Sigmoid colon (tissue), 7 donors: ENCODE measurements at regions of chr15 and their contacts with region 1.

Region 1: GRCh38 chr15:25830844-25831451 is 32.2 kb downstream of the ATP10A start:
- DNase-seq: peak; percentile 89
- H3K4me3 ChIP-seq: peak overlapping the region in 3 of 4 donors; percentile 25 to 39 (median 26)
- H3K27ac ChIP-seq: peak overlapping the region; percentile 80 to 93 (median 84)
- H3K4me1 ChIP-seq: peaks cover 0 to 30% (median 28%) of the 10 kb centered on the region in 4 donors
- H3K27me3 ChIP-seq: no peaks in the 10 kb centered on the region
- CTCF ChIP-seq: no peak
- EP300 ChIP-seq: peak in 2 of 4 donors; percentile 44 to 77
- POLR2A ChIP-seq: no peak

Region 2: GRCh38 chr15:25739687-25740121 is 91.2 kb before region 1 on chr15:
- intact Hi-C with region 1: loop called (anchors 5 kb)
- DNase-seq: no peak
- H3K4me3 ChIP-seq: no peak overlapping the region
- H3K27ac ChIP-seq: peak overlapping the region in 2 of 4 donors; percentile 23 to 88
- H3K4me1 ChIP-seq: peaks cover 0 to 35% (median 30%) of the 10 kb centered on the region in 4 donors
- H3K27me3 ChIP-seq: no peaks in the 10 kb centered on the region
- CTCF ChIP-seq: peak in 2 of 4 experiments; percentile 31 to 33
- EP300 ChIP-seq: no peak
- POLR2A ChIP-seq: no peak

Region 3: DNA sequence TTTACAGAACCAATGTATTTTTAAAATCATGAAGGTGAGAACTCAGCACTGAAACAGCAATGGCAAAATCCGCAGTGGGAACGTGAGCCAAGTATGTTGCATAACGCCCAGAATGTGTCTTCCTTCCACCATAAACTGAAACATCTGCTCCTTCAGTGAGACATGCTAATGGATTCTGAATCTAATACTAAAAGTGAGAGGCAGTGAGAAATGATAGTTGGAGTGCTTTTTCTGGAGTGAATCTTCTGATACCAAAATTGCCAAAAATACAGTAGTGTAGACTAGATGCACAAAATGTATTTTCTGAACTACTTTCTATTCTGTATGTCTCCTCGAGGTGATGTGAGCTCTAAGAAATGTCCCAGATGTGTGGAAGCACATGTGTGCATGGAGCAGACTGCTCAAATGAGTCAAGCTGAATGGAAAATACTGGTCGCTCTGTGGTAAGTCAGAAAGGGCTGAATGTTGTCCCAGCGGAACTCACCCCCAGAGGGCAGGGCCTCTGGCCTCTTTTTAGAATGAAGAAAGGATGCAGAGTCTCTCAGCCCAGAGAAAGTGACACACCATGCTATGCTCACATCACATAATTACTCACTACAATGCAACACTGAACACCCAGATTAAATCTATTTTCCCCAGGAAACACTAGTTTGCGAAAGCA is 40.8 kb before region 1 on chr15:
- intact Hi-C with region 1: loop called (anchors 5 kb)
- DNase-seq: peak; percentile 91
- H3K4me3 ChIP-seq: peak overlapping the region in 1 of 4 donors; percentile 0
- H3K27ac ChIP-seq: peak overlapping the region; percentile 77 to 89 (median 86)
- H3K4me1 ChIP-seq: peaks cover 0 to 68% (median 54%) of the 10 kb centered on the region in 4 donors
- H3K27me3 ChIP-seq: no peaks in the 10 kb centered on the region
- CTCF ChIP-seq: peak in 1 of 4 experiments; percentile 19
- EP300 ChIP-seq: peak in 1 of 4 donors; percentile 51
- POLR2A ChIP-seq: no peak

Region 4: DNA sequence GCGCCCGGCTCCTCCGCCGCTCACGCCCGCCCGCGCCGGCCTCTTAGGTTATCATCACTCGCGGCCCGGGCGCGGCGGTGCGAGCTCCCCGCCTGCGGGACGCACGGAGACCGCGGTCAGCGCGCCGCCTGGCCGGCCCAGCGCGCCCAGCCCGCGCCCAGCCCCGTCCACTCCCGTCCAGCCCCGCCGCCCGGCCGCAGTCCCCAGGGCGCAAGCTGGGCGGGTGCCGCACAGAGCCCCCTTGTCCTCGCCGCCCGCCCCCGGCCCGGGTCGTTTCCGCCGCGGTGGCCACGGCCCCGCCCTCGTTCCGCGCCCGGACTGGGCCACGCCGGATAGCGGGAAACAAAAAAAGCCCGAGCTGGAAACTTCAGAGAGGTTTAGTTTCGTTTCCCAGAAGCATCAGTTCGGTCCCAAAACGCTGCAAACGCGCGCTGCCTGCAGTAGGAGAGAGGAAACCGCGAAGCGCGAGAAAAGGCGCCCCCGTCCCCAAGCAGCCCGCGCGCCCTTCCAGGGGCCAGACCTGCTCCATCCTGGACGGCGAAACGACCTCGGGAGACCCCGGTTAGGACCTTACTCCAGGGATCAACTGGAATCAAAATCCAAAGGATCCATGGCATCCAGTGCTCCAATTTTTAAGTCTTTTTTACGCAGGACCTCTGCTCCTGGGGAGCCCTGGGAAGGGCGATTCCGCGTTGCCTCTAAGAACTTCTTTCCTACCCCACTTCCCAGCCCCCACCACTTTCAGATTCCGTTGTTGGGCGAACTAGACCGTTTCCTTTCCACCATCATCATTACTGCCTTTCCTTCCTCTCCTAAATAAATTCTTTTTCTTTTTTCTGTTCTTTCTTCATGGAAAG is 32.4 kb after region 1 on chr15 and contains the start of gene ATP10A:
- intact Hi-C with region 1: no loop called
- DNase-seq: peak; percentile 74
- H3K4me3 ChIP-seq: peak within 1 kb of the TSS; percentile 41 to 68 (median 66)
- H3K27ac ChIP-seq: peak within 1 kb of the TSS; percentile 73 to 95 (median 84)
- H3K4me1 ChIP-seq: peaks cover 0 to 48% (median 42%) of the 10 kb centered on the region in 4 donors
- H3K27me3 ChIP-seq: no peaks in the 10 kb centered on the region
- CTCF ChIP-seq: no peak
- EP300 ChIP-seq: no peak
- POLR2A ChIP-seq: no peak
- total RNA-seq, gene ATP10A: 1.8 to 7.7 (median 5.0) TPM